Mammary epithelial cell (primary cell): ENCODE measurements at regions of chr1 and their contacts with region 1.

Region 1: DNA sequence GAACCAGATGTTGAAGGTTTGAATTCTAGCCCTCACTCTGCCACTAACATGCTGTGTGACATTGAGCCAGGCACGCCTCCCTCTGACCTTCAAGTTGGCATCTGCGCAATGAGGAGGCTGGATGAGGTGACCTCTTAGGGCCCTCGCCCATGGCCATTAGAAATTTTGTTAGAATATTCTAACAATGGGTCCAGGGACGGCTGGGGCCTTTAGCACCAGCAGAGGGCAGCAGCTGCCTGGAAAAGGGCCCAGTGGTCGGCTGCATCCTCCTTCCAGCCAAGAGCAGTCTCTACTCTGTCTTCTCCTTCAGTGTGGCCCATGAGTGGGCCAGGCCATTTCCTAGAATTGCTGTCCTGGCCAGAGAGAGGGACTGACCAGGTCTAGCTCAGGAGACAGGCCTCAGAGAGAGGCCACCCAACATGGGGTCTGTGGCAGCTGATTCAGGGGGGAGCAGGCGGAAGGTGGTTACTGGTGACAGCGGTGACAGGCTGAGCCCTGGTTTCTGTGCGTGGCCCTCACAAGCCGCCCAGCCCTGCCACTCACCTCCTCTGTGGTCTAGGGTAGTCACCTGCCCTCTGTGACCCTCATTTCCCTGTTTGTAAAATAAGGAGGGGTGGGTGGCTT is 101.3 kb upstream of the ACTL8 start:
- DNase-seq: no peak
- H3K4me3 ChIP-seq: no peak overlapping the region
- H3K27ac ChIP-seq: no peak overlapping the region
- H3K4me1 ChIP-seq: no peaks in the 10 kb centered on the region
- H3K27me3 ChIP-seq: no peaks in the 10 kb centered on the region
- CTCF ChIP-seq: peak; percentile 70 to 80

Region 2: DNA sequence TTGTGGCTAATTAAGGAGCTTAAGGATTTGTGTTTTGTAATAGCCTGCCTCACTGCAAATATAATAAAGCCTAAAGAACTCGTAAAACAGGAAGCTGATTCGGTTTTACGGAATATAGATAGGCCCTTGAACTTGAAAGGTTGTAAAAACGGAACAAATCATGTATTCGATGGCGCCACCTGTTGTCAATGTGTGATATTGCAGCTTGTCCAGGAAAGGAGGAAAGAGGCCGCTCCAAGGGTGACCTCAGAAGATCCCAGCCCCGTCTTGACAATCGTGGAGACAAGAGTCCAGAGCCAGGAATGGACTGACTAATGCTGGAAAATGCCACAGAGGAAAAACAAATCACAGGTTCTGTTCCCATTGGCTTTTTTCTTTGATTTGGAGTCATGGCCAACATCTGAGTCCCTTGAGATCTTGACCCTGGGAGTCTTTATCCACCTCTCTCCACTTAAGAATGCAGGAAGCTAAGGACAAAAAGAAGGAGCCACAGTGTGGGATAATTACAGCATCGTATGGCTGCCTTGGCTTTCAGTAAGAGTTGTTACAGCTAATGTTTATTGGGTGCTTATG is 446.7 kb after region 1 on chr1:
- CTCF ChIA-PET with region 1: no interaction called
- dilution Hi-C with region 1: no loop called
- in situ Hi-C with region 1: no loop called
- intact Hi-C with region 1: loop called (anchors 1 kb)
- DNase-seq: peak; percentile 25
- H3K4me3 ChIP-seq: no peak overlapping the region
- H3K27ac ChIP-seq: no peak overlapping the region
- H3K4me1 ChIP-seq: no peaks in the 10 kb centered on the region
- H3K27me3 ChIP-seq: no peaks in the 10 kb centered on the region
- CTCF ChIP-seq: peak; percentile 68 to 75

Region 3: GRCh38 chr1:18820791-18821641 is 1167.2 kb after region 1 on chr1:
- CTCF ChIA-PET with region 1: no interaction called
- dilution Hi-C with region 1: no loop called
- in situ Hi-C with region 1: no loop called
- intact Hi-C with region 1: loop called (anchors 5 kb)
- DNase-seq: peak; percentile 38
- H3K4me3 ChIP-seq: no peak overlapping the region
- H3K27ac ChIP-seq: no peak overlapping the region
- H3K4me1 ChIP-seq: no peaks in the 10 kb centered on the region
- H3K27me3 ChIP-seq: peaks cover 4% of the 10 kb centered on the region
- CTCF ChIP-seq: peak; percentile 94 to 97